Mammary epithelial cell (primary cell): ENCODE measurements at regions of chr19 and their contacts with region 1.

Region 1: DNA sequence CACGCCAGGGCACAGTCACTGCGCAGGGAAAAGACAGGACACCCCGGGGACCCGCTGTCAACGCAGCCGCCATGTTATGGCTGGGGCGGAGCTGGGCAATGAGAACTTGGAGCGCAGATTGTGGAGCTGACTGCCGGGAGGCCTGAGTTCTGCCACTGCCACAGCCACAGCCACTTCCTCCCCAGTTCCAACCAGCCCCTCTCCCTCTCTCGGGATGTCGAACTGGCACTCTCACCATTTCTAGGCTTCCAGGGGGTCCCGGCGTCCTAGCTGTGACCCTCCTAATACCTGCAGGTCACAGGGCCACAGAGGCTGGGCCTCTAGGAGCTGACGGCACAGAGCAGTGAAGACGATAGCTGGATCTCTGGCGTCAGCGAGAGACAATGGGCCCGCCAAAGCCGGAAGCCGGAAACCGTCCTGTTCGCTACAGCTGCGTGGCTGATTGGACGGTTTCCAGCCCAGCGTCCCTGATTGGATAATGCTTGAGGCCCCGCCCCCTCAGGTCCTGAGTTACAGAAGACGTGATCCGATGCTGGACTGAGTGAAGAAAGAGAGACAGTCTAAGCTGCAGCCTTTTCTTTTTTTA is at the start of gene ZNF506:
- DNase-seq: peak; percentile 84
- H3K4me3 ChIP-seq: peak within 1 kb of the TSS; percentile 69 to 85 (median 83)
- H3K27ac ChIP-seq: peak within 1 kb of the TSS; percentile 38
- H3K4me1 ChIP-seq: no peaks in the 10 kb centered on the region
- H3K27me3 ChIP-seq: no peaks in the 10 kb centered on the region
- CTCF ChIP-seq: no peak
- total RNA-seq, gene ZNF506: 9.9 to 20.7 TPM

Region 2: GRCh38 chr19:19588546-19588945 is 232.9 kb before region 1 on chr19:
- CTCF ChIA-PET with region 1: no interaction called
- dilution Hi-C with region 1: no loop called
- in situ Hi-C with region 1: no loop called
- intact Hi-C with region 1: no loop called
- DNase-seq: peak; percentile 63
- H3K4me3 ChIP-seq: no peak overlapping the region
- H3K27ac ChIP-seq: no peak overlapping the region
- H3K4me1 ChIP-seq: peaks cover 18% of the 10 kb centered on the region
- H3K27me3 ChIP-seq: no peaks in the 10 kb centered on the region
- CTCF ChIP-seq: no peak

Region 3: GRCh38 chr19:19732579-19733501 is 88.6 kb before region 1 on chr19 and contains the start of gene ZNF14:
- CTCF ChIA-PET with region 1: no interaction called
- dilution Hi-C with region 1: no loop called
- in situ Hi-C with region 1: no loop called
- intact Hi-C with region 1: loop called (anchors 5 kb)
- DNase-seq: peak; percentile 90
- H3K4me3 ChIP-seq: peak within 1 kb of the TSS; percentile 66 to 74 (median 71)
- H3K27ac ChIP-seq: no peak within 1 kb of the TSS
- H3K4me1 ChIP-seq: no peaks in the 10 kb centered on the region
- H3K27me3 ChIP-seq: no peaks in the 10 kb centered on the region
- CTCF ChIP-seq: peak in 1 of 2 donors; percentile 33
- total RNA-seq, gene ZNF14: 3.1 to 7.2 TPM

Region 4: DNA sequence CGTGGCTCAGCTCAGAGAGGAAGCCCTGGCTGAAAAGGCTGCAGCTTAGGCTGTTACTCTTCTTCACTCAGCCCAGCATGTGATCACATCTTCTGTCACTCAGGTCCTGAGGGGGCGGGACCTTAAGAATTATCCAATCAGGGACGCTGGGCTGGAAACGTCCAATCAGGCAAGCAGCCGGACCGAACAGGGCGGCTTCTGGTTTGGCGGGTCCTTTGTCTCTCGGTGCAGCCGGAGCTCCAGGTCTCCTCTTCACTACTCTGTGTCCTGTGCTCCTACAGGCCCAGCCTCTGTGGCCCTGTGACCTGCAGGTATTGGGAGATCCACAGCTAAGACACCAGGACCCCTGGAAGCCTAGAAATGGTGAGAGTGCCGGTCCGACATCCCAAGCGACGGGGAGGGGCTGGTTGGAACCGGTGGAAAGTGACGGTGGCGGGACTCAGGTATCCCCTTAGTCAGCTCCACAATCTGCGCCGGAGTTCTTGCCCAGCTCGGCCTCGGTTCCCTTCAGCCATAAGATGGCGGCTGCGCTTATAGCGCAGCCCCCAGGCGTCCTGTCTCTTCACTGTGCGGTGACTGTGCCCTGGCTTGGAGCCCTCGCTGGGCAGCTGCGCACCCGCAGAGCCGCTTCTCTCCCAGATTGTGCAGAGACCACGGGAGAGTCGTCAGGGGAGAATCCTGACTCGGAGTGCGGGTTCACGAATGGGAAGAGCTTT is 79.4 kb after region 1 on chr19 and contains the start of gene ZNF93:
- CTCF ChIA-PET with region 1: no interaction called
- dilution Hi-C with region 1: no loop called
- in situ Hi-C with region 1: no loop called
- intact Hi-C with region 1: loop called (anchors 5 kb)
- DNase-seq: peak; percentile 95
- H3K4me3 ChIP-seq: peak within 1 kb of the TSS; percentile 41 to 50 (median 43)
- H3K27ac ChIP-seq: no peak within 1 kb of the TSS
- H3K4me1 ChIP-seq: no peaks in the 10 kb centered on the region
- H3K27me3 ChIP-seq: no peaks in the 10 kb centered on the region
- CTCF ChIP-seq: no peak
- total RNA-seq, gene ZNF93: 6.4 to 16.8 TPM

Region 5: DNA sequence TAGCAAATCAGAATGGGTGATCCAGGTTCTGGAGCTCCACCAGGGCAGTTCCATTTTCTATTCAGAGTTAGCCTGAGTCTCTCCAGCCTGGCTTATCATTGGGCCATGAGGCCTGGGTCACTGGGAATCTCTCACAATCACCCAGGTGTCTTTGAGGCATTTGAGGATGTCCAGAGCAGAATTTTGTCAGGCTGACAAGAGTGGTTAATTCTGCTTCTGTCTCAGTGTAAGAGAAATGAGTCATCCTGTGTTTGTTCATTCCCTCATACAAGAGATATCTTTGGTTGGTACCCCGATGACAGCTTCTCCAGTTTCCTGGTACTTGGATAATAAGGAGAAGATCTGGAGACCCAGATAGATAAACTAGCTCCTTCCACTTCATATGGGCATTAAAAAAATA is 89.7 kb after region 1 on chr19:
- CTCF ChIA-PET with region 1: no interaction called
- dilution Hi-C with region 1: no loop called
- in situ Hi-C with region 1: no loop called
- intact Hi-C with region 1: no loop called
- DNase-seq: peak; percentile 14
- H3K4me3 ChIP-seq: no peak overlapping the region
- H3K27ac ChIP-seq: no peak overlapping the region
- H3K4me1 ChIP-seq: no peaks in the 10 kb centered on the region
- H3K27me3 ChIP-seq: no peaks in the 10 kb centered on the region
- CTCF ChIP-seq: no peak

Region 6: DNA sequence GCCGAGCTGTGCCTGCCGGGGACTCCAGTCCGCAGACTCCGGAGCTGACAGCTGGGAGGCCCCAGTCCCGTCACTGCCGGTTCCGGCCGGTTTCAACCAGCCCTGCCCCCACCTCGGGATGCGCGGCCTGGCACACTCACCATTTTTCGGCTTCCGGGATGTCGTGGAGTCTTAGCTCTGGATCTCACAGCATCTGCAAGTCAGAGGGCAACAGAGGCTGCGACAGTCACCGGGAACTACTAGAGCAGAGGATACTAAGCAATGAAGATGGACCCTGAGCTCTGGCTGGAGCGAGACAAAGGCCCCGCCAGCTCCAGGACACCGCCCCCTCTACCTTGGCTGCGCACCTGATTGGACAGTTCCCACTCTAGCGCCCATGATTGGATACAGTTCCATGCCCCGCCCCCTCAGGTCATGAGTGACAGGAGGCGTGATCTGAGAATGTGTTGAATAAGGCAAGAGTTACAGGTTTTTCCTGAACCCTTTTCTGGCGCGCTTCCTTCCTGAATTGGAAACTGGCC is 217.8 kb after region 1 on chr19 and contains the start of gene ZNF682:
- CTCF ChIA-PET with region 1: no interaction called
- dilution Hi-C with region 1: no loop called
- in situ Hi-C with region 1: no loop called
- intact Hi-C with region 1: no loop called
- DNase-seq: peak; percentile 93
- H3K4me3 ChIP-seq: peak within 1 kb of the TSS in 1 of 3 experiments; percentile 33
- H3K27ac ChIP-seq: no peak within 1 kb of the TSS
- H3K4me1 ChIP-seq: no peaks in the 10 kb centered on the region
- H3K27me3 ChIP-seq: no peaks in the 10 kb centered on the region
- CTCF ChIP-seq: no peak
- total RNA-seq, gene ZNF682: 2.2 to 6.8 TPM